ENCODE measurements at regions of chr1 and their contacts with region 1.

Region 1: GRCh38 chr1:154936555-154937084 is at the start of gene PMVK:
- DNase-seq: peak; percentile 97 to 99 (median 99)
- H3K4me3 ChIP-seq: peak within 1 kb of the TSS; percentile 44 to 86 (median 80)
- H3K27ac ChIP-seq: peak within 1 kb of the TSS; percentile 99
- H3K4me1 ChIP-seq: peaks cover 12 to 61% (median 54%) of the 10 kb centered on the region in 4 experiments
- H3K27me3 ChIP-seq: no peaks in the 10 kb centered on the region

Region 2: DNA sequence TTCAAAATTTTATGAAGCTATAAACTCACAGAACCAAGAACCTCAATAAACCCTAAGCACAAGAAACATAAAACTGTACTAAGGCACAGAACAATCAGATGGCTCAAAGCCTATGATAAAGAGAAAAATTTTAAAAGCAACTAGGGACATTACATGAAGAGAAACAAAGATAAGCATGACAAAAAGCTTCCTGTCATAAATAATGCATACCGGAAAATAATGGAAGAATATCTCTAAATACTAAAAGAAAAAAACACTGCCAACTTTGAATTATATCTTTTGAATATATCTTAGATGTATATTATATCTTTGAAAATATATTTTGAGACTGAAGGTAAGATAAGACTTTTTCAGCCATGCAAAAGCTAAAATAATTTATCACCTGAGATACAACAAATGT is 45.2 kb before region 1 on chr1:
- CTCF ChIA-PET with region 1: interaction called, 10 read pairs
- POLR2A ChIA-PET with region 1: no interaction called
- DNase-seq: peak in 1 of 3 donors; percentile 16
- H3K4me3 ChIP-seq: no peak overlapping the region
- H3K27ac ChIP-seq: no peak overlapping the region
- H3K4me1 ChIP-seq: peaks cover 7 to 19% (median 12%) of the 10 kb centered on the region in 4 experiments
- H3K27me3 ChIP-seq: no peaks in the 10 kb centered on the region

Measured in common myeloid progenitor, CD34-positive (primary cell).